Gastrocnemius medialis (tissue), 4 donors: ENCODE measurements at regions of chr1 and their contacts with region 1.

Region 1: DNA sequence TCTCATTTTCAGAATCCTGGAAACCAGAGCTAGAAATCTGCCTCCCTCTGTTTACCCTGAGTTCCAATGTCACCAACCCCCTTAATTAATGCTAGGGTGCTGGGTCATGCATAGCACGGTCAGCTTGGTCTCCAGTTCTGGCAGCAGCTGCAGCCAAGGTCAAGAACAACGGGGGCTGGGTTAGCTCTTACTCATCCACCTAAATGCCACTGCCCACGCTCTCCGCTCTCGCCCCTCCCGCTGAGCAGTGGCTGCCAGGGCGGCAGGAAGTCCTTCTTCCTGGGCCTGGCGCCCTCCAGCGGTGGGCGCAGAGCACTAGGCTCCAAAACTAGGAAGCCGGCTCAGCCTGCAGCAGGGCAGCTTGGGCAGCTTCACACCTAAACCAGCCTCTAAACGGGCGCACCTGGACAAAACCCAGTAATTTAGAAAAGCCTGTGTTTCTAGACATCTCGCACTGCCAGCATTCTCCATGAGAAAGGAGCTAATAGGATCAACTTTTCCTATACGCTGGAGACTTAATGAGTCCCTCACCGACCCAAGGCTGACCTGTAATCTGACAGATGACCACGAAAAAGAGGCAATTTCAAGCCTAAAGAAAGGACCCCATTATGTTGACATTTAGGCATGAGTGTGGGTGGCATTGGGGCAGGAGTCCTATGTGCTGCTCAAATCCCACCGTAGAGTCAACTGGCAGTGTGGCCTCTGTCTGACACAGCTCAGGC is 78.3 kb upstream of the LRRN2 start:
- DNase-seq: peak in 1 of 2 donors; percentile 17
- ATAC-seq: no peak
- H3K4me3 ChIP-seq: no peak overlapping the region
- H3K27ac ChIP-seq: no peak overlapping the region
- H3K4me1 ChIP-seq: peaks cover 0 to 5% of the 10 kb centered on the region in 2 donors
- H3K27me3 ChIP-seq: peaks cover 0 to 20% (median 18%) of the 10 kb centered on the region in 3 donors
- CTCF ChIP-seq: peak in 4 of 5 experiments; percentile 24 to 62 (median 52)
- POLR2A ChIP-seq: no peak

Region 2: GRCh38 chr1:204565617-204566582 is 198.0 kb before region 1 on chr1:
- in situ Hi-C with region 1: no loop called
- intact Hi-C with region 1: loop called (anchors 5 kb)
- DNase-seq: peak in 1 of 2 donors; percentile 19
- ATAC-seq: peak; percentile 42 to 59
- H3K4me3 ChIP-seq: no peak overlapping the region
- H3K27ac ChIP-seq: no peak overlapping the region
- H3K4me1 ChIP-seq: no peaks in the 10 kb centered on the region
- H3K27me3 ChIP-seq: no peaks in the 10 kb centered on the region
- CTCF ChIP-seq: peak in 4 of 5 experiments; percentile 26 to 53 (median 38)
- POLR2A ChIP-seq: no peak

Region 3: GRCh38 chr1:204746838-204747442 is 16.9 kb before region 1 on chr1:
- in situ Hi-C with region 1: no loop called
- intact Hi-C with region 1: no loop called
- DNase-seq: no peak
- ATAC-seq: no peak
- H3K4me3 ChIP-seq: no peak overlapping the region
- H3K27ac ChIP-seq: no peak overlapping the region
- H3K4me1 ChIP-seq: no peaks in the 10 kb centered on the region
- H3K27me3 ChIP-seq: peaks cover 0 to 4% (median 3%) of the 10 kb centered on the region in 3 donors
- CTCF ChIP-seq: peak; percentile 48 to 92 (median 69)
- POLR2A ChIP-seq: no peak

Region 4: GRCh38 chr1:204961765-204962419 is 198.0 kb after region 1 on chr1:
- in situ Hi-C with region 1: no loop called
- intact Hi-C with region 1: no loop called
- DNase-seq: no peak
- ATAC-seq: no peak
- H3K4me3 ChIP-seq: no peak overlapping the region
- H3K27ac ChIP-seq: no peak overlapping the region
- H3K4me1 ChIP-seq: peaks cover 6 to 11% of the 10 kb centered on the region in 2 donors
- H3K27me3 ChIP-seq: no peaks in the 10 kb centered on the region
- CTCF ChIP-seq: no peak
- POLR2A ChIP-seq: no peak